Dendritic cell treated with granulocyte-macrophage colony-stimulating factor and Interleukin-4, amounts not matched to agents 40 ng/mL and 50 ng/mL, for 4 days (primary cell): ENCODE measurements at regions of chr14 and their contacts with region 1.

Region 1: GRCh38 chr14:75577729-75578101 is 705 bp upstream of the FLVCR2 start:
- H3K4me3 Mint-ChIP-seq: no peak overlapping the region
- H3K27ac Mint-ChIP-seq: no peak overlapping the region
- H3K4me1 Mint-ChIP-seq: peaks cover 19% of the 10 kb centered on the region
- H3K27me3 Mint-ChIP-seq: no peaks in the 10 kb centered on the region

Region 2: DNA sequence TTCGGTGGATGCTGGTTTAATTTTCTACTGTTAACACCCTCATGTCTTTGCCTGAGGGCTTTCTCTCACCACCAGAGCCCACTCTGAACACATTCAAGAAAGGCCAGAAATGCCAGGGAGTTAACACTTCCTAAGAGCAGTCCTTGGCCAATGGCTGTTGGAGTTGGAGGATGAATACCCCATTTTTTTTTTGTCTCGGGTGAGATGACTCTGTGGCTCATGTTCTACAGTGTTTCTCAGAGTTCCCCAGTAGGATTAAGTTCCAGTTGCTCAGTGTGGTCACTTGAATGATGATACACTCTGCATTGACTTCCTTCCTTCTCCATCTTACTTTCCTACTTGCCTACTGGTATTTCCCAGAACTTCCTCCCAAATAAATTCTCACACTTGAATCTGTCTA is 233.3 kb before region 1 on chr14:
- intact Hi-C with region 1: no loop called
- H3K4me3 Mint-ChIP-seq: no peak overlapping the region
- H3K27ac Mint-ChIP-seq: peak overlapping the region; percentile 96
- H3K4me1 Mint-ChIP-seq: peaks cover 69% of the 10 kb centered on the region
- H3K27me3 Mint-ChIP-seq: no peaks in the 10 kb centered on the region

Region 3: GRCh38 chr14:75597149-75597548 is 19.4 kb after region 1 on chr14:
- intact Hi-C with region 1: no loop called
- H3K4me3 Mint-ChIP-seq: no peak overlapping the region
- H3K27ac Mint-ChIP-seq: peak overlapping the region; percentile 88
- H3K4me1 Mint-ChIP-seq: peaks cover 84% of the 10 kb centered on the region
- H3K27me3 Mint-ChIP-seq: no peaks in the 10 kb centered on the region

Region 4: GRCh38 chr14:75615200-75615599 is 37.5 kb after region 1 on chr14:
- intact Hi-C with region 1: loop called (anchors 1 kb)
- H3K4me3 Mint-ChIP-seq: peak overlapping the region; percentile 27
- H3K27ac Mint-ChIP-seq: peak overlapping the region; percentile 94
- H3K4me1 Mint-ChIP-seq: peaks cover 89% of the 10 kb centered on the region
- H3K27me3 Mint-ChIP-seq: no peaks in the 10 kb centered on the region

Region 5: DNA sequence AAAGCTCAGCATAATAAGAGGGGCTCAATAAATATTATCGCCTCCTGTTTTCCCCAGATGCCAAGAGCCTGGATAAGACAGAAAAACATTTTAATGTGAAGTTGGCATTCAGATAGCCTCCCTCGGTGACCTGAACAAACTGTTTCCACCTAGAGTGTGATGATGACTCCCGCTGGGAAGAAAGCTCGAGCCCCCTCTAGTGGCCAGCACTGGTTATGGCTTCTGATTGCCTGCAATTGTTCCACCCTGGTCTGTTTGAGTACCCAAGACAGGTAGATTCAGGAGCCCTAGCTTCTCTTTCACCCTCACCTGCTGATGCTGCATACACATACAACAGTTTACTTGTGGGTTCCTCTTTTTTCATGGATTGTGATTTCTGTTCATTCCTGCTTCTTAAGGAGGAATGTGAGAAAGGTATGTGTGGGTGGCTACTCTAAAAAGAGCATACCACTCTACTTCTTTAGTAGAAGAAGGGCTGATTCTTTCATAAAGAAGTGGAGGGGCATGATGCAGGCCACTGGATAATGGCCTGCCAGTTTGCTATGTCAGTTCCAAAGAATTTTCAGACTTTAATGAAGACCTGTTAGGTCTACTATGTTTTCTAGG is 76.5 kb after region 1 on chr14:
- intact Hi-C with region 1: loop called (anchors 1 kb)
- H3K4me3 Mint-ChIP-seq: no peak overlapping the region
- H3K27ac Mint-ChIP-seq: no peak overlapping the region
- H3K4me1 Mint-ChIP-seq: peaks cover 23% of the 10 kb centered on the region
- H3K27me3 Mint-ChIP-seq: no peaks in the 10 kb centered on the region